Endothelial cell of umbilical vein (primary cell): ENCODE measurements at regions of chr17 and their contacts with region 1.

Region 1: GRCh38 chr17:45828628-45829027 is 16.1 kb upstream of the SPPL2C start:
- DNase-seq: no peak
- H3K4me3 ChIP-seq: no peak overlapping the region
- H3K27ac ChIP-seq: no peak overlapping the region
- H3K4me1 ChIP-seq: no peaks in the 10 kb centered on the region
- H3K27me3 ChIP-seq: no peaks in the 10 kb centered on the region
- CTCF ChIP-seq: no peak
- POLR2A ChIP-seq: no peak

Region 2: GRCh38 chr17:45640141-45640850 is 188.3 kb before region 1 on chr17:
- CTCF ChIA-PET with region 1: interaction called, 208 read pairs
- POLR2A ChIA-PET with region 1: no interaction called
- dilution Hi-C with region 1: no loop called
- intact Hi-C with region 1: loop called (anchors 1 kb)
- DNase-seq: peak; percentile 75
- H3K4me3 ChIP-seq: no peak overlapping the region
- H3K27ac ChIP-seq: no peak overlapping the region
- H3K4me1 ChIP-seq: no peaks in the 10 kb centered on the region
- H3K27me3 ChIP-seq: peaks cover 0 to 1% of the 10 kb centered on the region in 2 experiments
- CTCF ChIP-seq: peak; percentile 92 to 97
- POLR2A ChIP-seq: no peak

Region 3: DNA sequence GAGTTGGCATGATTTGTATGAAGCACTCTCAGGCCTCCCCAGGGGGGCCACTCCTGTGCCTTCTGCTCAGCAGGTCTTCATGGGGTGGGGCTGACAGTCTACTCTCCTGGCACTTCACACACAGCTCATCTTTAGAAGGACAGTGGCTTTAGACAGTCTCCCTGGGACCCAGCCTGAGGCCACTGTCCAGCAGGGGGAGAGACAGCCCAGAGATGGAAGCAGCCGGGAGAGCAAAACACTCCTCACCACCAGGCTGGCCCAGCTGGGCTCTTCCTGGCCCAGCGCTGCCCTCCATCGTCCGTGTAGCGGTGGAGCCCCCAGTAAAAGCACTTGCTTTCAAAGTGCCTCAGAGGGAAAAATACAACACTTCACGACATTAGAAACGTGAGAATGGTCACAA is 106.5 kb before region 1 on chr17:
- CTCF ChIA-PET with region 1: interaction called, 19 read pairs
- POLR2A ChIA-PET with region 1: no interaction called
- dilution Hi-C with region 1: no loop called
- intact Hi-C with region 1: loop called (anchors 2 kb)
- DNase-seq: no peak
- H3K4me3 ChIP-seq: no peak overlapping the region
- H3K27ac ChIP-seq: no peak overlapping the region
- H3K4me1 ChIP-seq: no peaks in the 10 kb centered on the region
- H3K27me3 ChIP-seq: peaks cover 2 to 18% of the 10 kb centered on the region in 2 experiments
- CTCF ChIP-seq: peak; percentile 8 to 28
- POLR2A ChIP-seq: no peak

Region 4: GRCh38 chr17:45814622-45815606 is 13.7 kb before region 1 on chr17:
- CTCF ChIA-PET with region 1: interaction called, 25 read pairs
- POLR2A ChIA-PET with region 1: no interaction called
- dilution Hi-C with region 1: no loop called
- intact Hi-C with region 1: no loop called
- DNase-seq: no peak
- H3K4me3 ChIP-seq: no peak overlapping the region
- H3K27ac ChIP-seq: no peak overlapping the region
- H3K4me1 ChIP-seq: no peaks in the 10 kb centered on the region
- H3K27me3 ChIP-seq: no peaks in the 10 kb centered on the region
- CTCF ChIP-seq: no peak
- POLR2A ChIP-seq: no peak

Region 5: GRCh38 chr17:45889579-45889978 is 61.0 kb after region 1 on chr17:
- CTCF ChIA-PET with region 1: no interaction called
- POLR2A ChIA-PET with region 1: no interaction called
- dilution Hi-C with region 1: no loop called
- intact Hi-C with region 1: no loop called
- DNase-seq: no peak
- H3K4me3 ChIP-seq: no peak overlapping the region
- H3K27ac ChIP-seq: no peak overlapping the region
- H3K4me1 ChIP-seq: peaks cover 3% of the 10 kb centered on the region
- H3K27me3 ChIP-seq: peaks cover 2 to 4% of the 10 kb centered on the region in 2 experiments
- CTCF ChIP-seq: no peak
- POLR2A ChIP-seq: no peak

Region 6: DNA sequence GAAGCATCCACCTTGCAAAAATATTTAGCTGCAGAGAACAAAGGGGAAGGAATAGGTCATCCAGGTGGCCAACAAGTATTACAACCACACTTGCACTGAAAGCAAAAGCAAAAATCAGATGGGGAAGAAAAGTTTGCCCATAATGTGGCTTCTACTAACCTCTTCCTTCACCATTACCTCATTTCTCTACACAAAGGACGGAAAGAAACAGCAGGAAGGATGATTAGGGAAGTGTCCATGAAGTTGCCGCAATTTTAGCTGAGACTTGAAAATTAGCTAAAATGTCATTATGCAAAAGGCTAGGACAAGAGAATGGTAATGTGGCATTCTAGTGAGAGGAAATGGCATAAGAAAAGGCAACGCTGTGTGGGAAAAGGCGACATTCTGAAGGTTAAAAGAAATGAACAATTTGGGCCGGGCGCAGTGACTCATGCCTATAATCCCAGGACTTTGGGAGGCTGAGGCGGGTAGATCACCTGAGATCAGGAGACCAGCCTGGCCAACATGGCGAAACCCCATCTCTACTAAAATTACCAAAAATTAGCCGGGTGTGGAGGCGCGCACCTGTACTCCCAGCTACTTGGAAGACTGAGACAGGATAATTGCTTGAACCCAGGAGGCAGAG is 350.9 kb after region 1 on chr17:
- CTCF ChIA-PET with region 1: no interaction called
- POLR2A ChIA-PET with region 1: no interaction called
- dilution Hi-C with region 1: no loop called
- intact Hi-C with region 1: no loop called
- DNase-seq: no peak
- H3K4me3 ChIP-seq: no peak overlapping the region
- H3K27ac ChIP-seq: no peak overlapping the region
- H3K4me1 ChIP-seq: no peaks in the 10 kb centered on the region
- H3K27me3 ChIP-seq: no peaks in the 10 kb centered on the region
- CTCF ChIP-seq: no peak
- POLR2A ChIP-seq: no peak